ENCODE measurements at regions of chr4 and their contacts with region 1.

Region 1: DNA sequence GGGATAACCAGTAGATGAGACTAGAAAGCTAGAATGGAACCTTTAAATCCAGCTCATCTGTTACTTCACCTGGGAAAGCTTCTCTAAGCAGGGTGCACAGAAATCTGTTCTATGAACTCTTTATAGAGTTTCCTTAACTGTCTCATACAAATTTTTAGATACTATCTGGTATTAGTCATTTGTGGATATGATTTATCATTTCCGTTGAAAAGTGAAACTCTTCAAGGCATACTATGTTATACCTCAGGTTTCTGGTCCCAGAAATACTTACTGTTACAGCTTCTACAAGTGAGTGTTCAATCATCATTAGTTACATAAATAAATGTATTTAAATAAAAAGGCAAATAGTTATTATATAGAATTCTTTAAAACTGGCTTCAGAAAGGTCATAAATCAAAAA is 298.3 kb upstream of the AGA start:
- DNase-seq: no peak
- H3K4me3 Mint-ChIP-seq: no peak overlapping the region
- H3K27ac Mint-ChIP-seq: no peak overlapping the region
- H3K4me1 Mint-ChIP-seq: peaks cover 6% of the 10 kb centered on the region
- H3K27me3 Mint-ChIP-seq: peaks cover 8% of the 10 kb centered on the region

Region 2: GRCh38 chr4:177758016-177758415 is 17.5 kb after region 1 on chr4:
- intact Hi-C with region 1: loop called (anchors 1 kb)
- DNase-seq: no peak
- H3K4me3 Mint-ChIP-seq: no peak overlapping the region
- H3K27ac Mint-ChIP-seq: no peak overlapping the region
- H3K4me1 Mint-ChIP-seq: peaks cover 7% of the 10 kb centered on the region
- H3K27me3 Mint-ChIP-seq: no peaks in the 10 kb centered on the region

Measured in activated T-helper 2 cell treated with anti-CD3 and anti-CD28 coated beads, Interferon-gamma antibody, Interleukin-2, Interleukin-4, amounts not matched to agents 10 μg/mL and 5 μg/mL and 100 μg/mL, durations not matched to agents 14 hours and 24 hours and 36 hours (primary cell).